Right cardiac atrium (tissue), 5 donors: ENCODE measurements at regions of chr2 and their contacts with region 1.

Region 1: GRCh38 chr2:70919672-70920366 is 15.9 kb upstream of the ATP6V1B1 start:
- DNase-seq: peak; percentile 70 to 91 (median 89)
- ATAC-seq: peak; percentile 81 to 83
- H3K4me3 ChIP-seq: no peak overlapping the region
- H3K27ac ChIP-seq: no peak overlapping the region
- H3K4me1 ChIP-seq: no peaks in the 10 kb centered on the region
- H3K27me3 ChIP-seq: no peaks in the 10 kb centered on the region

Region 2: DNA sequence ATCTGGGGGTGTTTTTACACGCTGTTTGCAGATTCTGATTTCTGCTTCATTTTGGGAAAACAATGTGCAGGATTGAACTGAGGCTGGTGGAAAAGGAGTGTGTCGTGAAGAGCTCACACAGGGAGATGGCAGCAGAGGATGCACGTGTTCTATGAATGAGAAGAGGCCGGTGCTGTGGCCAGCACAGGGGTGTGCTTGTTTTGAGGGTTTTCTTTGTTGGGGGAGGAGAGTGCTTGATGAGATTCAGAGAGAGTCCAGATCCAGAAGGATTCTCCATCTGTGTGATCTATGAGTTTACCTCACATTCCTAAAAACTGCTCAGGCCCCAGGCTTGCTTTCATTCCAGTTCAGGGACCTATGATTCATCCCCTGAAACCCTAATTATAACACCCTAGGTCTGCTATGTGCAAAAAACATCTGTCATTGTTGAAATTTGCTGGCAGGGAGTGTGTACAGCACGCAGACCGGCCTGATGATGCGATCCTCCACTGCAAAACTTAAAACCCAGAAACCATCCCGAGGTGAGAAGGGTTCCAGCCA is 378.3 kb before region 1 on chr2:
- intact Hi-C with region 1: no loop called
- DNase-seq: no peak
- ATAC-seq: no peak
- H3K4me3 ChIP-seq: no peak overlapping the region
- H3K27ac ChIP-seq: no peak overlapping the region
- H3K4me1 ChIP-seq: no peaks in the 10 kb centered on the region
- H3K27me3 ChIP-seq: no peaks in the 10 kb centered on the region

Region 3: DNA sequence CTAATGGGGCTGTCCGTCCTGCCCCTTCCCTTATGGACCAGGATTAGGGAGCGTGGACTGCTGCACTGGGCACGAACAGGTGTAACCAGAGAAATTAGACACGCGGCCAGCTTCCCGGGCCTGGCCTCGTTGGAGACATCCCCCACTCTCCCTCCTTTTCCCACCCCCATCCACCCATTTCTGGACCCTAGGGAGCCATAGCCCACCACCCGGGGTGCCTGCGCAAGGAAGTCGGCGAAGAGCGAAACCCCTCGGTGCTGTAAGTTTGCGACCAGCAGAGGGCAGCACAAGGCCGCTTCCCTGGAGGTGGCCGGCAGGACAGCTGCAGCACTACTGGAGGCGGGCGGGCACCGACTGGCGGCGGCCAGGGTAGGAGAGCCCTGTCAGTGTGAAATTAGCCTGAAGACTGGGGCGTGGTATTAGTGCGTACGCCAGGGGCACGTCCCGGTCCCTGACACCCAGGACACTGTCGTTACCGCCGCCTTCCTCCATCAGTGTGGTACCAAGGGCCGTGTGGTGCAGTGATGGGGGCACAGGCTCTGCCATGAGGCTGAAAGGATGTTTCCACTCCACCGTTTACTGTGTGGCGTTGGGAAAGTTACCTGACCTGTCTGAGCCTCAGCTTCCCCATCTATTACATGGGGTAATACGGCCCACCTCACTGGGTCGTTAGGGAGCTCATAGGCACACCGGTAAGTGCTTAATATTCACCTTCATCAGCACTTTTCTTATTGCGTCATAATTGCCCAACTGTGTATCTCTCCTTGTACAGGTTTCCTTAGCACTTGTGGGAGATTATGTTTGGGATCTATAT is 48.2 kb before region 1 on chr2:
- intact Hi-C with region 1: loop called in 2 of 4 experiments (anchors 5 kb)
- DNase-seq: peak; percentile 89 to 95 (median 95)
- ATAC-seq: peak; percentile 94 to 95
- H3K4me3 ChIP-seq: no peak overlapping the region
- H3K27ac ChIP-seq: no peak overlapping the region
- H3K4me1 ChIP-seq: no peaks in the 10 kb centered on the region
- H3K27me3 ChIP-seq: no peaks in the 10 kb centered on the region

Region 4: DNA sequence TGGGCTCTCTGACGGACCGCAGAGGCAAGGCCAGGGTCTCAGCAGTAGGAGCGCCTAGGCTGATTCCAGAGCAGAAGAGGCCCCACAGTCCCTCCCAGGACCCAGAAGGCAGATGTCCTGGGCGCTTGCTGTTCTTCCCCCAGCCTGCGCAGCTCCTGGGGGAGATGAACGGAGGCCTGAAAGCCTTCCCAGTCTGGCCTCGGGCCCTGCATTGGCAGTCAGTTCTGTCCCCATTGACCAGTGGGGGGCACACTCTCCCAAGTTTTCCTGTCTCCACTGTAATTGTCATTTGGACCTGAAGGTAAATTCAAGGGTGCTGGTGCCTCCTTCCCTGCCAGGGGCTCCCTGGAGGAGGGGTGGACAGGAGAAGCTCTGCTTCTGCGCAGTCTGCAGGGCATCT is 882.1 kb after region 1 on chr2:
- intact Hi-C with region 1: no loop called
- DNase-seq: peak; percentile 82 to 90 (median 90)
- ATAC-seq: peak; percentile 79 to 83
- H3K4me3 ChIP-seq: no peak overlapping the region
- H3K27ac ChIP-seq: no peak overlapping the region
- H3K4me1 ChIP-seq: peaks cover 8% of the 10 kb centered on the region
- H3K27me3 ChIP-seq: no peaks in the 10 kb centered on the region